ENCODE measurements at regions of chr14 and their contacts with region 1.

Region 1: DNA sequence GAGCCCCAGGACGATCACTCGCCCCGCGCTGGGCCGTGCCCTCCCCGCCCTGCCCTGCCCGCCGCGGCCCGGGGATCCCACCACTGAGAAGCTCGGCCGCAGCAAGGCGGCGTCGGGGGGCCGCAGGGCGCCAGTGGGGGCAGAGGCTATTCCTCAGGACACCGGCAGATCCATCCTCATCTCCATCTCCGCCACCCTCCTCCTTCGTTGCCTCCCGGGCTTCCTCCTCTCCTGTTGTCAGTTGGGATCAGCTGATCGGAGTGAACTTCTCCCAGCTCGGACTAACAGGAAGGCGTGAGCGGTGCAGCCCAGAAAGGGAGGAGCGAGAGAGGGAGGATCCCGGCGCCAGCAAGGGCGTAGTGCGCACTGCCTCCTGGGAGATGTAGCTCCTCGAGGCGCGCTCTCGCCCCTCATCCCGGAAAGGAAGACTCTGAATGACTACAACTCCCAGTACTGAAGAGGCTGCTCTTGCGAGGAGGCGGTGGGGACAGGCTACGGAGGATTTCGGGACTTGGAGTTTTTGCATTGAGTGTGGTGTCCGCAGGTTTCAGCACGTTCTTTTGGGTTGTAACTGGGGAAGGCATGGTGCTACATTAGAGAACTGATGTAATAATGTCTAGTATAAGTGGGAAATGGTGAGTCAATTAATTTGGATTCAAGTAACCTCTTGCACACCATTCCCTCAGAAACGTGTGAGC is at the start of gene ZFYVE1:
- DNase-seq: peak; percentile 90
- H3K4me3 Mint-ChIP-seq: peak within 1 kb of the TSS; percentile 97
- H3K27ac Mint-ChIP-seq: peak within 1 kb of the TSS; percentile 94
- H3K4me1 Mint-ChIP-seq: peaks cover 44% of the 10 kb centered on the region
- H3K27me3 Mint-ChIP-seq: peaks cover 1% of the 10 kb centered on the region
- total RNA-seq, gene ZFYVE1: 7.1 and 7.6 TPM in 2 replicates

Region 2: DNA sequence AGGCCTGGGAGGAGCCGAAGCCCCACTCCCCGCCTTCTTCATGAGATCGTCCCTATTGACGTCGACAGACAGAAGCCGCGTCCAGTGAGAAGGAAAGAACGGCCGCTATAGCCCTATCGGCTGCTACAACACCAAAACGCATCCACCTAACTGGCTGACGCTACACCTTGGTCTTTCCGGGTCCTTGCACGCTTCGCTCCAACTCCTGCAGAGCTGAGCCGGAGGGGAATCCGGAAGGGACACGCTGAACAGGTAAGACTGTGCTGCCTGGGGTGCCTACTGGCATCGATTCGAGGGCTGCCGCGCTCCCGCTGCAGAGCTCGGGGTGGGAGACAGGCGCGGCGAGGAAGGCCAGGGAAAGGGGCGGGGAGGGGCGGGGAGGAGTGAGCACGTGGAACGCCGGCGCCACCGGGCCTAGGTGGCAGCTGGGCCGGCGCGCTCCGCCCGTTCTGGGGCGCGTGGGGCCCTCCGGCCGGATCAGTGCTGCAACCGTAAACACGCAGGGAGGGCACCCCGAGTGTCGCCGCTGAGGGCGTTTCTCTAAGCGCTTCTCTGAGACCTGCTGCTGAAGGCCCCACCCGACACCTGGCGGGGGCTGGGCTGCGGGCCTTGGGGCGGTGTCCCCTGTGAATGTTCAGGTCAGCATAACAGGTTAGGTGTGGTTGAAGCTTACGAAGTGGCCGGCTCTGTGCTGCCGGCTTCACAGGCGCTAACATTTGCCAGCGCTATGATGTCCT is 100.5 kb before region 1 on chr14 and contains the start of gene DCAF4:
- intact Hi-C with region 1: loop called (anchors 2 kb)
- DNase-seq: peak; percentile 94
- H3K4me3 Mint-ChIP-seq: peak within 1 kb of the TSS; percentile 90
- H3K27ac Mint-ChIP-seq: peak within 1 kb of the TSS; percentile 95
- H3K4me1 Mint-ChIP-seq: peaks cover 8% of the 10 kb centered on the region
- H3K27me3 Mint-ChIP-seq: peaks cover 16% of the 10 kb centered on the region
- total RNA-seq, gene DCAF4: 17.1 and 20.4 TPM in 2 replicates

Region 3: DNA sequence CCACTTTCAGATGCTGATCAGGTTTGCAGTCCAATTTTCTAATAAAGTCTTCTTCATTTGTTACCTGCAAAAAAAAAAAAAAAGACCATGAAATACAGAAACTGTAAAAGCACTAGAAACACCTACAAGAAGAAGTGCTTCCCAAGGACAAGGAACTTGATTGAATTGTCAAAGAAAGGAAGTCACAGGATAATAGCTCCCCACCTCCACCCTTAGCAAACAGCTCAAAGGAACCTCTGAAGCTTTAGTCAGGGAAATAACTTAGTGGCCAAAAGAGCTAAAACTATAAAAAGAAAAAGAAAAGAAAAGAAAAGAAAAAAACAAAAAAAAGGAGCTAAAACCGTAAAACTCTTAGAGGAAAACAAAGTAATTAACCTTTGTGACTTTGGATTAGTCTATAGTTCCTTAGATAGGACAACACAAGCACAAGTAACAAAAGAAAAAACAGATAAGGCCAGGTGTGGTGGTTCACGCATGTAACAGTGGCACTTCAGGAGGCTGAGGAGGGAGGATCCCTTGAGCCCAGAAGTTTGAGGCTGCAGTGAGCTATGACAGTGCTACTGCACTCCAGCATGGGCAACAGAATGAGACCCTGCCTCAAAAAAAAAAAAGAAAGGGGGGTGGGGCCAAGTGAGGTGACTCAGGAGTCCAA is 28.6 kb before region 1 on chr14:
- intact Hi-C with region 1: no loop called
- DNase-seq: no peak
- H3K4me3 Mint-ChIP-seq: no peak overlapping the region
- H3K27ac Mint-ChIP-seq: no peak overlapping the region
- H3K4me1 Mint-ChIP-seq: peaks cover 6% of the 10 kb centered on the region
- H3K27me3 Mint-ChIP-seq: no peaks in the 10 kb centered on the region

Region 4: DNA sequence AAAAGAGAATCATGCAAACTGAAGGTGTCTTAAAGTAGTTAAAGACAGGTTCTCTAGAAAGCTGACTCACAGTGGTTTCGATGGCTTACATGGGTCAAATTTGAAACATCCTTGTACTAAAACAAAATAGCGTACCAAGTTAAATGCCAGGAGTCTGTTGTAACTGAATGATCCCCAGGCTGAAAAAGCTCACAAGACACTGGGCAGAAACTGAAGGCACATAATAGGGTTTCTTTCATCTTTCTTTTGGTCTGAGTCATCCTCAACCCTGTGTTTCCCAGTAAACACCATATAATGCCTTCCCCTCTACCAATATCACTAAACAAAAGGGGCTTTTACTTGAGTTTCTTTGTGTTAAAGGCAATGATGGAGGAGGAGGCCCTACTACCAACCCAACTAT is 12.9 kb before region 1 on chr14:
- intact Hi-C with region 1: loop called (anchors 1 kb)
- DNase-seq: peak; percentile 1
- H3K4me3 Mint-ChIP-seq: no peak overlapping the region
- H3K27ac Mint-ChIP-seq: peak overlapping the region; percentile 71
- H3K4me1 Mint-ChIP-seq: peaks cover 18% of the 10 kb centered on the region
- H3K27me3 Mint-ChIP-seq: no peaks in the 10 kb centered on the region

Region 5: DNA sequence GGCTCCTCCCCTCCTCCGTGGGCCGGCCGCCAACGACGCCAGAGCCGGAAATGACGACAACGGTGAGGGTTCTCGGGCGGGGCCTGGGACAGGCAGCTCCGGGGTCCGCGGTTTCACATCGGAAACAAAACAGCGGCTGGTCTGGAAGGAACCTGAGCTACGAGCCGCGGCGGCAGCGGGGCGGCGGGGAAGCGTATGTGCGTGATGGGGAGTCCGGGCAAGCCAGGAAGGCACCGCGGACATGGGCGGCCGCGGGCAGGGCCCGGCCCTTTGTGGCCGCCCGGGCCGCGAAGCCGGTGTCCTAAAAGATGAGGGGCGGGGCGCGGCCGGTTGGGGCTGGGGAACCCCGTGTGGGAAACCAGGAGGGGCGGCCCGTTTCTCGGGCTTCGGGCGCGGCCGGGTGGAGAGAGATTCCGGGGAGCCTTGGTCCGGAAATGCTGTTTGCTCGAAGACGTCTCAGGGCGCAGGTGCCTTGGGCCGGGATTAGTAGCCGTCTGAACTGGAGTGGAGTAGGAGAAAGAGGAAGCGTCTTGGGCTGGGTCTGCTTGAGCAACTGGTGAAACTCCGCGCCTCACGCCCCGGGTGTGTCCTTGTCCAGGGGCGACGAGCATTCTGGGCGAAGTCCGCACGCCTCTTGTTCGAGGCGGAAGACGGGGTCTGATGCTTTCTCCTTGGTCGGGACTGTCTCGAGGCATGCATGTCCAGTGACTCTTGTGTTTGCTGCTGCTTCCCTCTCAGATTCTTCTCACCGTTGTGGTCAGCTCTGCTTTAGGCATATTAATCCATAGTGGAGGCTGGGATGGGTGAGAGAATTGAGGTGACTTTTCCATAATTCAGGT is 109.6 kb after region 1 on chr14 and contains the start of gene PSEN1:
- intact Hi-C with region 1: loop called (anchors 1 kb)
- DNase-seq: peak; percentile 98
- H3K4me3 Mint-ChIP-seq: peak within 1 kb of the TSS; percentile 86
- H3K27ac Mint-ChIP-seq: peak within 1 kb of the TSS; percentile 100
- H3K4me1 Mint-ChIP-seq: peaks cover 19% of the 10 kb centered on the region
- H3K27me3 Mint-ChIP-seq: no peaks in the 10 kb centered on the region
- total RNA-seq, gene PSEN1: 41.1 and 41.9 TPM in 2 replicates

Region 6: GRCh38 chr14:73311708-73312030 is 284.7 kb after region 1 on chr14:
- intact Hi-C with region 1: no loop called
- DNase-seq: no peak
- H3K4me3 Mint-ChIP-seq: no peak overlapping the region
- H3K27ac Mint-ChIP-seq: no peak overlapping the region
- H3K4me1 Mint-ChIP-seq: no peaks in the 10 kb centered on the region
- H3K27me3 Mint-ChIP-seq: no peaks in the 10 kb centered on the region

Measured in activated T-helper 1 cell treated with anti-CD3 and anti-CD28 coated beads, Interleukin-12 subunit alpha, Interleukin-12 subunit beta, Interleukin-2, Interleukin-4 antibody, amounts not matched to agents 30 ng/mL and 10 ng/mL and 1 ng/mL, durations not matched to agents 14 hours and 24 hours and 36 hours (primary cell).